MCF 10A (cell line): ENCODE measurements at regions of chr1 and their contacts with region 1.

Region 1: GRCh38 chr1:100351095-100351891 is 1.0 kb upstream of the CDC14A start:
- DNase-seq: peak; percentile 91
- H3K4me3 Mint-ChIP-seq: peak overlapping the region; percentile 92
- H3K27ac Mint-ChIP-seq: peak overlapping the region; percentile 86
- H3K4me1 Mint-ChIP-seq: peaks cover 22% of the 10 kb centered on the region
- H3K27me3 Mint-ChIP-seq: no peaks in the 10 kb centered on the region
- CTCF ChIP-seq: peak; percentile 32

Region 2: GRCh38 chr1:100132566-100133477 is 218.5 kb before region 1 on chr1 and contains the starts of genes SASS6 and TRMT13:
- CTCF ChIA-PET with region 1: no interaction called
- POLR2A ChIA-PET with region 1: interaction called, 3 read pairs
- intact Hi-C with region 1: loop called (anchors 2 kb)
- DNase-seq: peak; percentile 98
- H3K4me3 Mint-ChIP-seq: peak within 1 kb of the TSS; percentile 86
- H3K27ac Mint-ChIP-seq: peak within 1 kb of the TSS; percentile 75
- H3K4me1 Mint-ChIP-seq: peaks cover 19% of the 10 kb centered on the region
- H3K27me3 Mint-ChIP-seq: no peaks in the 10 kb centered on the region
- CTCF ChIP-seq: no peak
- total RNA-seq, gene SASS6: 6.6 and 7.5 TPM in 2 replicates
- total RNA-seq, gene TRMT13: 24.2 and 25.5 TPM in 2 replicates

Region 3: GRCh38 chr1:100249537-100250257 is 101.6 kb before region 1 on chr1 and contains the start of gene DBT:
- CTCF ChIA-PET with region 1: no interaction called
- POLR2A ChIA-PET with region 1: interaction called, 24 read pairs
- intact Hi-C with region 1: no loop called
- DNase-seq: peak; percentile 96
- H3K4me3 Mint-ChIP-seq: no peak within 1 kb of the TSS
- H3K27ac Mint-ChIP-seq: no peak within 1 kb of the TSS
- H3K4me1 Mint-ChIP-seq: peaks cover 9% of the 10 kb centered on the region
- H3K27me3 Mint-ChIP-seq: no peaks in the 10 kb centered on the region
- CTCF ChIP-seq: no peak
- total RNA-seq, gene DBT: 9.1 and 11.0 TPM in 2 replicates

Region 4: DNA sequence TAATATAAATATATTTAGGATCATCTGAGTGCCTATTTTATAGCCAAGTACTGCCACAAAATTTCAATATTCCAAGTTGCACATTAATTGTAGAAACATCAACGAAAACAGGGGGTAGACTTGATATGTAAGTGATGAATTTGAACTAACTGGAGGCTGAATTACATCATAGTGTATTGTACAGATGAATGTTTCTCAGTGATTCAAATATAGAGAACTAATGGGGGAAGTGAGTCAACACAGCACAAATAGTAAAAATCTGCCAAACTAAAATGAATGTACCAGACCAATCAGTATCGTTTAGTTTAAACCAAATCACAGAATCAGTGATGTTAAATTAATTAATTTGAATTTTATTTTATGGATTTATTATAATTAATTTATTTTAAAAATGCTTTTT is 42.5 kb before region 1 on chr1:
- CTCF ChIA-PET with region 1: no interaction called
- POLR2A ChIA-PET with region 1: no interaction called
- intact Hi-C with region 1: loop called (anchors 5 kb)
- DNase-seq: peak; percentile 6
- H3K4me3 Mint-ChIP-seq: no peak overlapping the region
- H3K27ac Mint-ChIP-seq: no peak overlapping the region
- H3K4me1 Mint-ChIP-seq: peaks cover 5% of the 10 kb centered on the region
- H3K27me3 Mint-ChIP-seq: no peaks in the 10 kb centered on the region
- CTCF ChIP-seq: no peak

Region 5: GRCh38 chr1:100322436-100323211 is 28.7 kb before region 1 on chr1:
- CTCF ChIA-PET with region 1: interaction called, 4 read pairs
- POLR2A ChIA-PET with region 1: interaction called, 3 read pairs
- intact Hi-C with region 1: loop called (anchors 2 kb)
- DNase-seq: peak; percentile 34
- H3K4me3 Mint-ChIP-seq: no peak overlapping the region
- H3K27ac Mint-ChIP-seq: peak overlapping the region; percentile 65
- H3K4me1 Mint-ChIP-seq: peaks cover 13% of the 10 kb centered on the region
- H3K27me3 Mint-ChIP-seq: no peaks in the 10 kb centered on the region
- CTCF ChIP-seq: no peak

Region 6: GRCh38 chr1:100404821-100405220 is 53.5 kb after region 1 on chr1:
- CTCF ChIA-PET with region 1: no interaction called
- POLR2A ChIA-PET with region 1: no interaction called
- intact Hi-C with region 1: no loop called
- DNase-seq: no peak
- H3K4me3 Mint-ChIP-seq: no peak overlapping the region
- H3K27ac Mint-ChIP-seq: no peak overlapping the region
- H3K4me1 Mint-ChIP-seq: peaks cover 4% of the 10 kb centered on the region
- H3K27me3 Mint-ChIP-seq: no peaks in the 10 kb centered on the region
- CTCF ChIP-seq: no peak